ENCODE measurements at regions of chr14 and their contacts with region 1.

Region 1: GRCh38 chr14:67571272-67571850 is 28.7 kb downstream of the PIGH start:
- DNase-seq: peak; percentile 45
- ATAC-seq: peak; percentile 93
- H3K4me3 ChIP-seq: no peak overlapping the region
- H3K27ac ChIP-seq: no peak overlapping the region
- H3K4me1 ChIP-seq: peaks cover 14% of the 10 kb centered on the region
- H3K27me3 ChIP-seq: no peaks in the 10 kb centered on the region
- CTCF ChIP-seq: peak; percentile 93
- EP300 ChIP-seq: no peak
- POLR2A ChIP-seq: no peak
- RAD21 ChIP-seq: peak; percentile 72

Region 2: DNA sequence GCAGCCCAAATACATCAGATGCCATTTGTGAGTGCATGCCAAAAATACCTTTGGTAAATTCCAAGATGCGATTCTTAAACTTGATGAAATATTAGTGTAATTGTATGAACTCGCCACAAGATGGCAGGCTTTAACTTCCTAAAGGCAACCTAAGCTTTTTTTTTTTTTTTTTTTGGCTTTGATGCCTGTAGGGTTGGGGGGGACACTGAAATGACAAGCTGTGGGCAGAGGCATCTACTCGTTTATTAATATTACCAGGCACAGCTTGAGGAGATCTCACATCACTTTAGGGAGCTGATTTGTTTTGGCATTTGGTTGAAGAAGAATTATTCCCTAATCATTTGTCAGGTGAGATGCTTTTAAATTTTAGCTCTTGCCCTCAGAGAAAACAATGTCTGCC is 1211.9 kb before region 1 on chr14:
- CTCF ChIA-PET with region 1: no interaction called
- POLR2A ChIA-PET with region 1: no interaction called
- in situ Hi-C with region 1: no loop called
- intact Hi-C with region 1: loop called (anchors 5 kb)
- DNase-seq: peak; percentile 53
- ATAC-seq: no peak
- H3K4me3 ChIP-seq: no peak overlapping the region
- H3K27ac ChIP-seq: no peak overlapping the region
- H3K4me1 ChIP-seq: no peaks in the 10 kb centered on the region
- H3K27me3 ChIP-seq: no peaks in the 10 kb centered on the region
- CTCF ChIP-seq: peak; percentile 72
- EP300 ChIP-seq: no peak
- POLR2A ChIP-seq: no peak
- RAD21 ChIP-seq: no peak

Region 3: DNA sequence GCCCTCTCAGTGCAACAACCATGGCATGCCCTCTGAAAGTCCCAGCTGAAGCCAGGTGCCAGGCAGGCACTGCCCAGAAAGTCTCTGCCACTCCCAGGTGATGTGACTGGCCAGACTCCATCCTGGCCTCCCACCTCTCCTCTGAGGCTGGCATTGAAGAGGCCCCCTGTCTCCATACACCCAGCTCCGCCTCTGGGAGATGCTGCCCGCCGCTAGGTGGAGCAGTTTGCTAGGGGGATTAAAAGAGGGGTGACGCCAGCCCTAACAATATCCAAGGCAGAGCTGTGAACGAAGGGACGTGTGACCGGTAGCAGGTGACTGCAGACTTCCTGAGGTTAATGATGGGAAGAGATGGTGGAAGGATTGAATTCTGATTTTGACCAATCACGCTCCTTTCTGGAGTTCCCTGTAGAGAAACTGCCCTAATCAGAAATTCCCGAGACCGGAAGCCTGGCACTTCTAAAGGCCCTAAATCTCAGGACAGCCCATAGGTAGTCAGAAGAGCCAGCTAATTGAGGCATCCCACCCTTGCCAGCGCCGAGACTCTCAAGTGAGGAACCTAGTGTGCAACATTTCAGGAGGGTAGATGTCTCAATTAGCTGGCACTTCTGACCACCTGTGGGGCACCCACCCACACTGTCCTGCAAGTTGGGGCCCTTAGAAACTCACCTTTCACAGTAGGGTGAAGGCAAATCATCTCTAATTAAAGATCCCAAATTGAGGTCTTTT is 151.1 kb before region 1 on chr14:
- CTCF ChIA-PET with region 1: no interaction called
- POLR2A ChIA-PET with region 1: no interaction called
- in situ Hi-C with region 1: loop called (anchors 5 kb)
- intact Hi-C with region 1: no loop called
- DNase-seq: peak; percentile 32
- ATAC-seq: peak; percentile 90
- H3K4me3 ChIP-seq: no peak overlapping the region
- H3K27ac ChIP-seq: no peak overlapping the region
- H3K4me1 ChIP-seq: peaks cover 10% of the 10 kb centered on the region; the same call in 1 of the 2 replicates
- H3K27me3 ChIP-seq: peaks cover 2 to 6% of the 10 kb centered on the region in 2 experiments; a peak in 3 of 5 replicates
- CTCF ChIP-seq: peak; percentile 80
- EP300 ChIP-seq: no peak
- POLR2A ChIP-seq: no peak
- RAD21 ChIP-seq: no peak

Region 4: GRCh38 chr14:67426983-67427606 is 144.3 kb before region 1 on chr14:
- CTCF ChIA-PET with region 1: interaction called, 22 read pairs
- POLR2A ChIA-PET with region 1: interaction called, 9 read pairs
- in situ Hi-C with region 1: loop called (anchors 5 kb)
- intact Hi-C with region 1: loop called (anchors 1 kb)
- DNase-seq: peak; percentile 76
- ATAC-seq: peak; percentile 82
- H3K4me3 ChIP-seq: peak overlapping the region in 1 of 3 experiments; percentile 41; a peak in 1 of 6 replicates
- H3K27ac ChIP-seq: no peak overlapping the region
- H3K4me1 ChIP-seq: peaks cover 32% of the 10 kb centered on the region
- H3K27me3 ChIP-seq: peaks cover 0 to 6% of the 10 kb centered on the region in 2 experiments; a peak in 2 of 5 replicates
- CTCF ChIP-seq: peak; percentile 91
- EP300 ChIP-seq: no peak
- POLR2A ChIP-seq: no peak
- RAD21 ChIP-seq: peak; percentile 82

Region 5: GRCh38 chr14:67526676-67527459 is 44.5 kb before region 1 on chr14:
- CTCF ChIA-PET with region 1: interaction called, 25 read pairs
- POLR2A ChIA-PET with region 1: interaction called, 3 read pairs
- in situ Hi-C with region 1: loop called (anchors 5 kb)
- intact Hi-C with region 1: loop called (anchors 1 kb)
- DNase-seq: peak; percentile 43
- ATAC-seq: peak; percentile 96
- H3K4me3 ChIP-seq: no peak overlapping the region
- H3K27ac ChIP-seq: no peak overlapping the region
- H3K4me1 ChIP-seq: peaks cover 38% of the 10 kb centered on the region
- H3K27me3 ChIP-seq: peaks cover 0 to 14% of the 10 kb centered on the region in 2 experiments; a peak in 2 of 5 replicates
- CTCF ChIP-seq: peak; percentile 92
- EP300 ChIP-seq: no peak
- POLR2A ChIP-seq: no peak
- RAD21 ChIP-seq: peak; percentile 69

Region 6: DNA sequence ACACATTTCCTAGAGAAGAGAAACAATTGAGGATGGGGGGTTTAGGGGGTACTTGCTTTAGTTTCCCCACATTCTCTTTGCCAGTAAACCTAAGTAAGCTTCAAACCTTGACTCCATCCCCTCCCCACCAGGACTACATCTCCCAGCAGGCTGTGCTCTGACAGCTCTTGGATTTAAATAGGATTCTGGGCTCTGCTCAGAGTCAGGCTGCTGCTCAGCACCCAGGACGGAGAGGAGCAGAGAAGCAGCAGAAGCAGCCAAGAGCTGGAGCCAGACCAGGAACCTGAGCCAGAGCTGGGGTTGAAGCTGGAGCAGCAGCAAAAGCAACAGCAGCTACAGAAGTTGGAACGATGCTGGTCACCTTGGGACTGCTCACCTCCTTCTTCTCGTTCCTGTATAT is 150.9 kb after region 1 on chr14:
- CTCF ChIA-PET with region 1: no interaction called
- POLR2A ChIA-PET with region 1: no interaction called
- in situ Hi-C with region 1: no loop called
- intact Hi-C with region 1: no loop called
- DNase-seq: no peak
- ATAC-seq: peak; percentile 80
- H3K4me3 ChIP-seq: peak overlapping the region; percentile 9 to 62 (median 47); a peak in 5 of 6 replicates
- H3K27ac ChIP-seq: no peak overlapping the region
- H3K4me1 ChIP-seq: peaks cover 42% of the 10 kb centered on the region
- H3K27me3 ChIP-seq: no peaks in the 10 kb centered on the region
- CTCF ChIP-seq: no peak
- EP300 ChIP-seq: no peak
- POLR2A ChIP-seq: no peak
- RAD21 ChIP-seq: no peak